CD4-positive, alpha-beta memory T cell (primary cell): ENCODE measurements at regions of chr1 and their contacts with region 1.

Region 1: GRCh38 chr1:201481761-201482493 is 12.9 kb upstream of the PHLDA3 start:
- DNase-seq: peak; percentile 75 to 80 (median 77)
- H3K4me3 ChIP-seq: peak overlapping the region; percentile 52
- H3K4me3 Mint-ChIP-seq: peak overlapping the region; percentile 75 to 86 (median 83)
- H3K27ac ChIP-seq: no peak overlapping the region
- H3K27ac Mint-ChIP-seq: peak overlapping the region in 5 of 7 donors; percentile 42 to 74 (median 65)
- H3K4me1 ChIP-seq: peaks cover 25% of the 10 kb centered on the region
- H3K4me1 Mint-ChIP-seq: peaks cover 5 to 29% (median 19%) of the 10 kb centered on the region in 4 donors
- H3K27me3 ChIP-seq: peaks cover 5% of the 10 kb centered on the region
- H3K27me3 Mint-ChIP-seq: peaks cover 2 to 6% of the 10 kb centered on the region in 2 donors

Region 2: GRCh38 chr1:201436393-201436792 is 45.5 kb before region 1 on chr1:
- CTCF ChIA-PET with region 1: interaction called, 12 read pairs
- POLR2A ChIA-PET with region 1: no interaction called
- intact Hi-C with region 1: no loop called
- DNase-seq: no peak
- H3K4me3 ChIP-seq: no peak overlapping the region
- H3K4me3 Mint-ChIP-seq: no peak overlapping the region
- H3K27ac ChIP-seq: no peak overlapping the region
- H3K27ac Mint-ChIP-seq: peak overlapping the region in 2 of 7 donors; percentile 5 to 89
- H3K4me1 ChIP-seq: no peaks in the 10 kb centered on the region
- H3K4me1 Mint-ChIP-seq: peaks cover 4 to 8% (median 6%) of the 10 kb centered on the region in 4 donors
- H3K27me3 ChIP-seq: no peaks in the 10 kb centered on the region
- H3K27me3 Mint-ChIP-seq: peaks cover 9 to 14% of the 10 kb centered on the region in 2 donors

Region 3: DNA sequence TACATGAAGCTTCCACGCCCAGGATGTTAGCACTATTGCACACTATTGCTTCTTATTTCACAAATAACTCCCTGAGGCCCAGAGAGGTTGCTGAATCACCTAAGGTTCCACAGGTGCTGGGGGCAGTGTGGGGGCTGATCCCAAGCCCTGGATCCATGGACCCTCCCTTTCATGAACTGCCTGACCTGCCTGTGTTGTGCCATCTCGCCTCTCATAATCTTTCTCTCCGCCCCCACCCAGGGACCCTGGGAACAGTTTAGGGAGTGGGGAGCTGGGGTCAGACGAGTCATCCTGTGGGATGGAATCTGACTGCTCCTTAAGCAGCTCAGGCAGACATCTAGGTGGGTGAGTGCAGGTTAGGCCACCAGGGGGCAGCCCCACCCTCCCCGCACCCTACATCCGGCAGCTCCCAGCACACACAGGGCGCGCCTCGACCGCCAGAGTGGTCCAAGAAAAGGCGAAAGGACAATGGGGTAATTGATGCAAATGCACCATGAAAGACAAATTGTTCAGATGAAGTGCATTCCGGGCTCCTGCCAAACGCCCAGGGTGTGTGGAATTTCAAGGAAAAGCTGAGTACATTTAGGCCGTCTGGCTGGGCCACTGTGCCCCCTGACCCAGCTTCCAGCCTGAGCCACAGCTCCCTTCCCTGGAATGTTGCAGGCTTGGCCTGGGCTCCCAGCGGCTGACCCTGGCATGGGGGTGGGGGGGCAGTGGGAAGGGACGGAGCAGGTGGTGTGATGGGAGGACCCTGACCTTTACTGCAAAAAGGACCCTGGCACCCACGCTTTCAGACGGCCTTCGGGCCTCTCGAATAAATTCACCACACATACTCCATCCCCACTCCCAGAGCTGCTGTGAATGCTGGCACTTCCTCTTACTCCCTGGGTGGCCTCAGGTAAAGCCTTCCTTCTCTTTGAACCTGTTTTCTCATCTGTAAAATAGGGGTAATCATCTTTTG is 33.7 kb before region 1 on chr1:
- CTCF ChIA-PET with region 1: interaction called, 38 read pairs
- POLR2A ChIA-PET with region 1: no interaction called
- intact Hi-C with region 1: loop called (anchors 1 kb)
- DNase-seq: peak in 4 of 5 donors; percentile 29 to 53 (median 30)
- H3K4me3 ChIP-seq: no peak overlapping the region
- H3K4me3 Mint-ChIP-seq: no peak overlapping the region
- H3K27ac ChIP-seq: no peak overlapping the region
- H3K27ac Mint-ChIP-seq: peak overlapping the region in 1 of 7 donors; percentile 57
- H3K4me1 ChIP-seq: peaks cover 6% of the 10 kb centered on the region
- H3K4me1 Mint-ChIP-seq: peaks cover 0 to 4% (median 3%) of the 10 kb centered on the region in 4 donors
- H3K27me3 ChIP-seq: no peaks in the 10 kb centered on the region
- H3K27me3 Mint-ChIP-seq: peaks cover 5 to 9% of the 10 kb centered on the region in 2 donors

Region 4: GRCh38 chr1:201495471-201496295 is 13.8 kb after region 1 on chr1:
- CTCF ChIA-PET with region 1: interaction called, 714 read pairs
- POLR2A ChIA-PET with region 1: interaction called, 3 read pairs
- intact Hi-C with region 1: no loop called
- DNase-seq: no peak
- H3K4me3 ChIP-seq: no peak overlapping the region
- H3K4me3 Mint-ChIP-seq: no peak overlapping the region
- H3K27ac ChIP-seq: no peak overlapping the region
- H3K27ac Mint-ChIP-seq: peak overlapping the region in 1 of 7 donors; percentile 60
- H3K4me1 ChIP-seq: no peaks in the 10 kb centered on the region
- H3K4me1 Mint-ChIP-seq: peaks cover 0 to 15% (median 3%) of the 10 kb centered on the region in 4 donors
- H3K27me3 ChIP-seq: no peaks in the 10 kb centered on the region
- H3K27me3 Mint-ChIP-seq: no peaks in the 10 kb centered on the region

Region 5: GRCh38 chr1:201506556-201507359 is 24.8 kb after region 1 on chr1 and contains the start of gene CSRP1:
- CTCF ChIA-PET with region 1: interaction called, 714 read pairs
- POLR2A ChIA-PET with region 1: interaction called, 41 read pairs
- intact Hi-C with region 1: loop called (anchors 1 kb)
- DNase-seq: peak; percentile 80 to 85 (median 83)
- H3K4me3 ChIP-seq: peak within 1 kb of the TSS; percentile 8 to 83
- H3K4me3 Mint-ChIP-seq: peak within 1 kb of the TSS; percentile 91 to 94 (median 92)
- H3K27ac ChIP-seq: peak within 1 kb of the TSS; percentile 70
- H3K27ac Mint-ChIP-seq: peak within 1 kb of the TSS; percentile 85 to 96 (median 95)
- H3K4me1 ChIP-seq: peaks cover 37% of the 10 kb centered on the region
- H3K4me1 Mint-ChIP-seq: peaks cover 35 to 54% (median 44%) of the 10 kb centered on the region in 4 donors
- H3K27me3 ChIP-seq: no peaks in the 10 kb centered on the region
- H3K27me3 Mint-ChIP-seq: no peaks in the 10 kb centered on the region
- total RNA-seq, gene CSRP1: 34.2 to 36.0 TPM

Region 6: DNA sequence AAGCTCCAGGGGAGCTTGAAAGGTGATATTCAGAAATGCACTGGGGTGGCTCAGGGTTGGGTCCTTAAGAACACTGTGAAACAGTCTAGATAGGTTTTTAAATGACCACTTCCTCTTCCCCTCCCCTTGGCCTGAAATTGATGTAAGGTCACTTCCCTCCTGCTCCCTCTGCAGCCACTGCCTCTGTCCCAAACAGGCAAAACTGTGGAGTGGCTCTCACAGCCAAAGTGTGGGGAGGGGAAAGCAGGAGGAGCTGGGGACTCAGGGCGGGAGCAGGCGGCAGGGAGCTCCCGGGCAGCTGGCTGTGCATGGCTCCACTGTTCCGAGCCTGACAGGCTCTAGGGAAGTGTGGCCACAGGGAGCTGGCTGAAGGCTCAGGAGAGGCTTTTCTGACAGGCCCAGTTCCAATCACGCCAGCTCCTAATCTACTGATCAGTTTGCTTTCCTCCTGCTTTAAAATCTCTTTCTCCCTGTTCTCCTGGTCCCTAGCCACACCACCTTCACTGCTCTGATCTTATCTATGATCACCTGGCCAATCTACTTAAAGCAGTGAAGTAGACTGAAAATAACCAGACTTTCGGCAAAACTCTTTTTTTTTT is 30.1 kb after region 1 on chr1:
- CTCF ChIA-PET with region 1: interaction called, 714 read pairs
- POLR2A ChIA-PET with region 1: interaction called, 41 read pairs
- intact Hi-C with region 1: loop called (anchors 1 kb)
- DNase-seq: no peak
- H3K4me3 ChIP-seq: no peak overlapping the region
- H3K4me3 Mint-ChIP-seq: no peak overlapping the region
- H3K27ac ChIP-seq: no peak overlapping the region
- H3K27ac Mint-ChIP-seq: peak overlapping the region in 1 of 7 donors; percentile 18
- H3K4me1 ChIP-seq: peaks cover 11% of the 10 kb centered on the region
- H3K4me1 Mint-ChIP-seq: peaks cover 13 to 24% (median 20%) of the 10 kb centered on the region in 4 donors
- H3K27me3 ChIP-seq: no peaks in the 10 kb centered on the region
- H3K27me3 Mint-ChIP-seq: no peaks in the 10 kb centered on the region

Region 7: DNA sequence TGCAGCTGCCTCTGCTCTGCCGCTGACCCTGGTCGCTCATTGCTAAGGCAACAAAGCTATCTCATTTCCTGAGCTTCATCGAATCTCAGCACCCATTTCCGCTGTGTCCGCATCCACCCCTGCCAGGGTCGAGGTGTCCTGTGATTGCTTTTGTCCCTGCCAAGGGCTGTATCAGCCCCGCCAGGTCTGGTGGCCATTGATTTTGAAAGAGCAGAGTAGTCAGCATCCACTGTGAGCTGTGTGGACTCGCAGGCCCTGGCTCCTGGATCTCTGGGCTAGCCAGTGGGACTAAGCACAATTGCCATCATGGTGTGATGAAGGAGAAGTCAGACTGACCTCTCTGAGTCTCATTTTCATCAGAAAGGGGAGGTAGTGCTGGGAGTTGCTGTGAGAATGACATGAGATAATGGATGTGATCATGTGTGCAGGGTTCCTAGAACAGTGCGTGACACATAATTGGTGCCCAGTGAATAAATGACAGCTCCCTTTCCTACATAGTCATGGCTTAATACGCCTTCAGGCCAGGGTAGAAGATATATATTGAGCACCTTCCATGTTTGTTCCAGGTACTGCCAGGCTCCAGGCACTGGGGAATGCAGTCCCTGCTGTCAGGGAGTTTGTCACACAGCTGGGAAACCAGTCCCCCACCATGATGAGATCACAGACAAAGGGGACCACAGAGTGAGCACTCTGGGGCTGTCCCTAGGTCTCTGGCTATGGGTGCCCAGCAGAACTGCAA is 89.1 kb after region 1 on chr1:
- CTCF ChIA-PET with region 1: no interaction called
- POLR2A ChIA-PET with region 1: no interaction called
- intact Hi-C with region 1: no loop called
- DNase-seq: no peak
- H3K4me3 ChIP-seq: no peak overlapping the region
- H3K4me3 Mint-ChIP-seq: no peak overlapping the region
- H3K27ac ChIP-seq: no peak overlapping the region
- H3K27ac Mint-ChIP-seq: no peak overlapping the region
- H3K4me1 ChIP-seq: peaks cover 8% of the 10 kb centered on the region
- H3K4me1 Mint-ChIP-seq: peaks cover 8 to 12% (median 9%) of the 10 kb centered on the region in 4 donors
- H3K27me3 ChIP-seq: no peaks in the 10 kb centered on the region
- H3K27me3 Mint-ChIP-seq: no peaks in the 10 kb centered on the region